Heart left ventricle (tissue), 16 donors: ENCODE measurements at regions of chr11 and their contacts with region 1.

Region 1: GRCh38 chr11:6705905-6706535 is 22.9 kb upstream of the MRPL17 start:
- DNase-seq: peak in 1 of 5 donors; percentile 46
- ATAC-seq: peak in 3 of 4 donors; percentile 49 to 61 (median 59)
- H3K4me3 ChIP-seq: no peak overlapping the region
- H3K27ac ChIP-seq: peak overlapping the region in 8 of 12 donors; percentile 7 to 53 (median 30)
- H3K4me1 ChIP-seq: peaks cover 0 to 25% (median 16%) of the 10 kb centered on the region in 12 donors
- H3K27me3 ChIP-seq: no peaks in the 10 kb centered on the region
- CTCF ChIP-seq: peak; percentile 82 to 97 (median 93)
- POLR2A ChIP-seq: no peak

Region 2: DNA sequence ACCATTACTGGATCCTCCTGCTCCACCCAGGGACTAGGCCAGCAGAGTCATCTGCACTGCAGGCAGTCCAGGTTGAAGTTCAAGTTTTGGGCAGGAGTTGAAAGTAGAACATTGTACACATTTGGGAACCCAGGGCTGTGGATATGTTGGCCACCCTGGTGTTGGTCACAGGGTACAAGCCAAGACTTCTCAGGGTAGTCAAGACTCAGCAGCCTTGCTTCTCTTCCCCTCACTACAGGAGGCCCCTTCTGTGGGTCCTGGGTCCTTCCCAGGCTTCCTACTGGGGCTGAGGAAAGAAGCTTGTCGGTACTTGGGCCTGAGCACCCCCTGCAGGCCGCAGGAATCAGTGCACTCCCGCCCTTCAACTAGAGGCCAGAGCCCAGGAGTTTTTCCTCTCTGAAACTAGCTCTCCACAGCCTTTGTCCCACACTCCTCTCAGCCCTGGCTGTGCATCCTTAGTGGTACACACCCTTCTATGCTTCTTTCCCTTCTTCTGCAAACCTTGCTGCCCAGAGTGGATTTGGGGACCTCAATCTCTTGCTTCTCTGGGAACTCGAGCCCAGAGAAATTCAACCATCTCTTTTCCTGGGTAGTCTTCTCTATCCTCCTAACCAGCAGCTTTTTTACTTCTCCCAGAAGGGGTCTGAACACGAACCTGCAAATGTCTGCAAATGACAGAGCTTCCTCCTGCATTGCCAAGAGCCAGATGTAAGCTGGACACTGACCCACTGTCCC is 262.6 kb before region 1 on chr11:
- intact Hi-C with region 1: loop called in 1 of 10 experiments (anchors 10 kb)
- DNase-seq: peak; percentile 40 to 70 (median 44)
- ATAC-seq: peak in 3 of 4 donors; percentile 81 to 87 (median 83)
- H3K4me3 ChIP-seq: no peak overlapping the region
- H3K27ac ChIP-seq: no peak overlapping the region
- H3K4me1 ChIP-seq: peaks cover 0 to 5% (median 0%) of the 10 kb centered on the region in 12 donors
- H3K27me3 ChIP-seq: no peaks in the 10 kb centered on the region
- CTCF ChIP-seq: peak; percentile 66 to 90 (median 80)
- POLR2A ChIP-seq: no peak

Region 3: GRCh38 chr11:6531267-6531752 is 174.7 kb before region 1 on chr11:
- intact Hi-C with region 1: loop called in 8 of 10 experiments (anchors 1 to 5 kb)
- DNase-seq: no peak
- ATAC-seq: peak in 3 of 4 donors; percentile 49 to 55 (median 54)
- H3K4me3 ChIP-seq: no peak overlapping the region
- H3K27ac ChIP-seq: no peak overlapping the region
- H3K4me1 ChIP-seq: no peaks in the 10 kb centered on the region
- H3K27me3 ChIP-seq: no peaks in the 10 kb centered on the region
- CTCF ChIP-seq: peak; percentile 65 to 86 (median 79)
- POLR2A ChIP-seq: no peak